Activated CD8-positive, alpha-beta memory T cell treated with anti-CD3 and anti-CD28 coated beads, Interleukin-2, amount 10 ng/mL, durations not matched to agents 7 days and 5 days (primary cell): ENCODE measurements at regions of chr10 and their contacts with region 1.

Region 1: DNA sequence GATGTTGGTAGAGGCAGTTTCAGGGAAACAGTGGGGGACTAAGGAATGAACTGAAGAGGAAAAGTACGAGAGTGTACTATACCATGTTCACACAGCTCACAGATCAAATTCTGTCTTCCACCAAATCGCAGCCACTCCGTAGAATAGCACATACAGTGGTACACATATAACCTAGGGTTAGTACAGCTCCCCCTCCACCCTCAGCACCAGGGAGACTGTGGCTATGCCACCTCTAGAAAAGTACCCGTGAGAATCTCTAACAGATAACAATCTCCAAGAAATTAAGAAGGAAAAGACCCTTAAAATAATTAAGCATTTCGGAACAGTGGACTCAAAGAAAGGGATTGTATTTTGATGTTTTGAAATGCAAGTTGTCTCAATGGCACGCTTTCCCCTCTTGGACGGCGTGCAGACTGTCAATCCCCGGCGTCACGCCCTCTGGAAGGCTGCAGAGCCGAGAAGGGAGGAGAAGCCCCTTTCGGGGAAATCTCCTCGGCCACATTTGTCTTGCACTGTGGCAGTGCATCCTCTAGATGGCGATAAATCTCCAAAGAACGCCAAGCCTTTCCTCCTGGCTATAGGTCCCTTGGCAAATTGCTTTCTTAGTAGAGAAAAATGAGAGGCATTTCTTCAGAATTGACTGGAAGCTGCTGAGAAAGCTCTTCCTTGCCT is 345.0 kb downstream of the REEP3 start:
- DNase-seq: peak; percentile 60
- ATAC-seq: peak; percentile 74
- H3K4me3 Mint-ChIP-seq: no peak overlapping the region
- H3K27ac Mint-ChIP-seq: no peak overlapping the region
- H3K4me1 Mint-ChIP-seq: peaks cover 3% of the 10 kb centered on the region
- H3K27me3 Mint-ChIP-seq: peaks cover 33% of the 10 kb centered on the region

Region 2: GRCh38 chr10:63812501-63812900 is 53.7 kb before region 1 on chr10:
- CTCF ChIA-PET with region 1: no interaction called
- DNase-seq: no peak
- ATAC-seq: no peak
- H3K4me3 Mint-ChIP-seq: no peak overlapping the region
- H3K27ac Mint-ChIP-seq: no peak overlapping the region
- H3K4me1 Mint-ChIP-seq: no peaks in the 10 kb centered on the region
- H3K27me3 Mint-ChIP-seq: peaks cover 11% of the 10 kb centered on the region

Region 3: GRCh38 chr10:63825766-63826165 is 40.4 kb before region 1 on chr10:
- CTCF ChIA-PET with region 1: no interaction called
- DNase-seq: no peak
- ATAC-seq: no peak
- H3K4me3 Mint-ChIP-seq: no peak overlapping the region
- H3K27ac Mint-ChIP-seq: no peak overlapping the region
- H3K4me1 Mint-ChIP-seq: no peaks in the 10 kb centered on the region
- H3K27me3 Mint-ChIP-seq: peaks cover 13% of the 10 kb centered on the region

Region 4: GRCh38 chr10:63878428-63878827 is 12.2 kb after region 1 on chr10:
- CTCF ChIA-PET with region 1: interaction called, 12 read pairs
- DNase-seq: no peak
- ATAC-seq: no peak
- H3K4me3 Mint-ChIP-seq: no peak overlapping the region
- H3K27ac Mint-ChIP-seq: no peak overlapping the region
- H3K4me1 Mint-ChIP-seq: no peaks in the 10 kb centered on the region
- H3K27me3 Mint-ChIP-seq: peaks cover 9% of the 10 kb centered on the region

Region 5: GRCh38 chr10:63976538-63976937 is 110.3 kb after region 1 on chr10:
- CTCF ChIA-PET with region 1: interaction called, 21 read pairs
- DNase-seq: peak; percentile 48
- ATAC-seq: peak; percentile 36
- H3K4me3 Mint-ChIP-seq: no peak overlapping the region
- H3K27ac Mint-ChIP-seq: no peak overlapping the region
- H3K4me1 Mint-ChIP-seq: no peaks in the 10 kb centered on the region
- H3K27me3 Mint-ChIP-seq: no peaks in the 10 kb centered on the region